ENCODE measurements at regions of chr11 and their contacts with region 1.

Region 1: GRCh38 chr11:17978553-17979287 is 34.1 kb downstream of the SERGEF start:
- DNase-seq: peak; percentile 57
- ATAC-seq: peak; percentile 89

Region 2: GRCh38 chr11:17730608-17731462 is 247.9 kb before region 1 on chr11:
- intact Hi-C with region 1: loop called (anchors 2 kb)
- DNase-seq: peak; percentile 89
- ATAC-seq: peak; percentile 87

Region 3: GRCh38 chr11:17760102-17761029 is 218.4 kb before region 1 on chr11:
- intact Hi-C with region 1: loop called (anchors 10 kb)
- DNase-seq: peak; percentile 71
- ATAC-seq: peak; percentile 94

Region 4: DNA sequence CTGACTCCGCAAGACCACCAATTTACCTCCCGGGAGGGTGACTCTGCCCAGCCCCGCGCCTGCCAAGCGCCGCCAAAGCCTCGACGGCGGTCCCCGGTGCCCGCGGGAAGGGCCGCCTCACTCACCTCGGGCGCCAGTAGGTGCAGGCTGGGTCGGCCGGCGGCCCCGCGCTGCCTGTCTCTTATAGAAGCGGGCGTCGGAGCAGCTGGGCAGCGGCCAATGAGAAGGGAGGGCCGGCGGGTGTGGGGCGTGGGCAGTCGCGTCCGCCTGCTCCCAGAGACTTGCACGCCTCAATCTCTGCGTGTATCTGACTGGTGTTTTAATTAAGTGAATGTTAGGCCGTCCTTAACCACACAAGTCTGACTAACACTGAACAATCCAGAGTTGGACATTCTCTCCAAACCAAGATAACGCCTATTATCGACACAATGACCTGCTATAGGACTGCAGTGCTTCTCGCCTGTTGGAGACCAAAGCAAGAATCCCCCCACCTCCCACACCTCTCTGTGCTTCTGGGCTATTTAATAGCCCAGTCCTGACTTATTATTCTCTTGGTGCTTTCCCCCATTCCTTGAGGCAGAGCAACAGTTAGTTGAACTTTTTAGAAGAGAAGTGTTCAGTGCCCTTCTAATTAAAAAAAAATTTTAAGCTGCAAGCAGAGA is 67.5 kb after region 1 on chr11 and contains the start of gene TPH1:
- intact Hi-C with region 1: no loop called
- DNase-seq: peak; percentile 67
- ATAC-seq: peak; percentile 81
- total RNA-seq, gene TPH1: not detected